IMR-90 (cell line): ENCODE measurements at regions of chr12 and their contacts with region 1.

Region 1: GRCh38 chr12:121648458-121649028 is 20.9 kb downstream of the MORN3 start:
- DNase-seq: no peak
- ATAC-seq: no peak
- H3K4me3 ChIP-seq: no peak overlapping the region
- H3K27ac ChIP-seq: no peak overlapping the region
- H3K4me1 ChIP-seq: no peaks in the 10 kb centered on the region
- H3K27me3 ChIP-seq: no peaks in the 10 kb centered on the region
- CTCF ChIP-seq: no peak
- POLR2A ChIP-seq: no peak
- RAD21 ChIP-seq: no peak

Region 2: GRCh38 chr12:121494093-121494787 is 154.3 kb before region 1 on chr12:
- CTCF ChIA-PET with region 1: no interaction called
- POLR2A ChIA-PET with region 1: interaction called, 19 read pairs
- dilution Hi-C with region 1: no loop called
- in situ Hi-C with region 1: no loop called
- intact Hi-C with region 1: no loop called
- DNase-seq: peak; percentile 33
- ATAC-seq: peak; percentile 72
- H3K4me3 ChIP-seq: no peak overlapping the region
- H3K27ac ChIP-seq: no peak overlapping the region
- H3K4me1 ChIP-seq: no peaks in the 10 kb centered on the region
- H3K27me3 ChIP-seq: no peaks in the 10 kb centered on the region
- CTCF ChIP-seq: peak; percentile 72
- POLR2A ChIP-seq: no peak
- RAD21 ChIP-seq: peak; percentile 50

Region 3: GRCh38 chr12:121568971-121569751 is 79.4 kb before region 1 on chr12:
- CTCF ChIA-PET with region 1: no interaction called
- POLR2A ChIA-PET with region 1: no interaction called
- dilution Hi-C with region 1: no loop called
- in situ Hi-C with region 1: no loop called
- intact Hi-C with region 1: no loop called
- DNase-seq: peak; percentile 49
- ATAC-seq: peak; percentile 79
- H3K4me3 ChIP-seq: no peak overlapping the region
- H3K27ac ChIP-seq: no peak overlapping the region
- H3K4me1 ChIP-seq: no peaks in the 10 kb centered on the region
- H3K27me3 ChIP-seq: no peaks in the 10 kb centered on the region
- CTCF ChIP-seq: no peak
- POLR2A ChIP-seq: no peak
- RAD21 ChIP-seq: no peak

Region 4: DNA sequence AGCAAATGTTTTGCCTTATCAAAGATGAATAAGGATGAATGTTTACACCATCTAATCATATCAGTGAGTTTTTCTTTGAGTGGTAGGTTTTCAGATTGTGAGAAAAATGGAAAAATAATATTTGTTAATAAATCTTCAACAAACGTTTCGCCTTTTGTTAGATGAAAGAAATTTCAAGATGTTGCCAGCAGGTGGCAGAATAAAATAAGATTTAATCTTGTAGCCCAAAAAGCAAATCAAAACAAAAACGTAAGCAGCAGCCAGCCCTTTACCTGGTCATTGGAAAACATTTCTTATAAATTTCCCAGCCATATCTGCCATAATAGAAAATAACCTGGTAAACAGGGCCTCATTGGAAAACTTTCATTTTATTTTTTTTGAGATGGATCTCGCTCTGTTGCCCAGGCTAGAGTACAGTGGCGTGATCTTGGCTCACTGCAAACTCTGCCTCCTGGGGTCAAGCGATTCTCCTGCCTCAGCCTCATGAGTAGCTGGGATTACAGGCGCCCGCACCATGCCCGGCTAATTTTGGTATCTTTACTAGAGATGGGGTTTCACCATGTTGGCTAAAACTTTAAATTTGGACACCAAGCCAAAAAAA is 48.7 kb after region 1 on chr12:
- CTCF ChIA-PET with region 1: no interaction called
- POLR2A ChIA-PET with region 1: no interaction called
- dilution Hi-C with region 1: no loop called
- in situ Hi-C with region 1: no loop called
- intact Hi-C with region 1: no loop called
- DNase-seq: peak; percentile 53
- ATAC-seq: peak; percentile 59
- H3K4me3 ChIP-seq: no peak overlapping the region
- H3K27ac ChIP-seq: no peak overlapping the region
- H3K4me1 ChIP-seq: no peaks in the 10 kb centered on the region
- H3K27me3 ChIP-seq: peaks cover 2% of the 10 kb centered on the region; the same call in 1 of the 2 replicates
- CTCF ChIP-seq: peak; percentile 65
- POLR2A ChIP-seq: no peak
- RAD21 ChIP-seq: peak; percentile 72